ENCODE measurements at regions of chr13 and their contacts with region 1.

Region 1: DNA sequence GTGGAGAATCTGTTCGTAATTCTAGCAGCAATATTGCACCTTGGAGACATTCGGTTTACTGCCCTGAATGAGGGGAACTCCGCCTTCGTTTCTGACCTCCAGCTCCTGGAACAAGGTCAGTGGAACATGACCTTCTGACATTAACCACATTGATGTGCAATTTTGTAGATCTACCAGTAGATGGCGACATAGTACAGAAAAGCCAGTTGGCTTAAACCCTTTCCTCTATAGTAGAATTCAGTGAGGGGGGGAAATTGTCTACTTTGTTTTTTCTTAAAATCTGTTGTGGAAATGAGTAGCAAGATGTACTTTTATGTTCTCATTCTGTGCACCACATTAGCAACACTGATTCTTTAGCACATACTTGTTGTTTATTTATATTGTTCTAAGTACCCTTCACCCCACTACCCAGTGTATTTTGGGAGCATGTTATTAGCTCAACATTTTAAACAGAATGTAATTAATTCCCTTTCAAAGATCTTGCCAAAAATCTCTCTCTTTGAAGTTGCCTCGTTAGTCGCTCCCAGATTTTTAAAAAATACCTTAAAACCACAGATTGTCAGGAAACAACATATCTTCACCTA is 332.2 kb downstream of the MYO16 start:
- DNase-seq: peak; percentile 4
- ATAC-seq: peak; percentile 72
- H3K4me3 Mint-ChIP-seq: no peak overlapping the region
- H3K27ac Mint-ChIP-seq: no peak overlapping the region
- H3K4me1 Mint-ChIP-seq: no peaks in the 10 kb centered on the region
- H3K27me3 Mint-ChIP-seq: peaks cover 6% of the 10 kb centered on the region
- CTCF ChIP-seq: peak; percentile 85

Region 2: DNA sequence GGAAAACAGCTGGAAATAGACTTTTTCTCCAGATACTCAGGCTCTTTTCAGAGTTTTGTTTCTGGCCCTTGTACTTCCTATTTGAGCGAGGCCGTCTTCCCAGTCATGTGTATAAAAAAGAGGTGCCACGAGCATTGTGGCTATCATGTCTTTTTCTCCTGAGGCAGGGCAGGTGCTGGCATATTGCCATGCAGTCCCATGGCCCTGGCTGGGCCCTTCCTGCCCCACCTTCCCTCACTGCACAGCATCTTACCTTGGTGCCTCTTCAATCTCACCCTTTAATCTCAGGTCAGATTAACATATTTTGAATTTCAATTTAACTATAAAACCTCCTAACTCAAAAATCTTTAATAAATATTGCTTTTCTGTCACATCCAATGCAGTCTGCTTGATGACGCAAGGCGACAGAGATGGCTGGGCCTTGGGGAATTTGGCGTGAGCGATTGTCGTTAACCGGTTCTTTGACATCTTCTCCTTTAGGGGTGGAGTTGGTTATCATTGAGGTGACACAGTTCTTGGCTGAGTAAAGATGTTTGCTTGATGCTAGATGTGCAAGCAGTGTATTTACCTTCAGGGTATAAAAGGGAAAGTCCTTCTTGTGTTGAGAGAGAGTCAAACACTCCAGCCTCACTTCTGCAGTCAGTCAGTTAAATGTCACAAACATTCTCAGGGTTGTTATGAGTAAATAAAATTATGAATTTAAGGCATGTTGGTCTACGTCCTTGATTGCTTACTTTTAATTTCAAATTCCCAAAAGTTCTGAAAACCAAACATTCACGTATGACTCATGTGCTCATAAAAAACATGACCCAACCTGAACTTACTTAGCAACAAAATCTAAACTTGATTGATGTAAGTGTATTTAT is 42.4 kb before region 1 on chr13:
- CTCF ChIA-PET with region 1: no interaction called
- POLR2A ChIA-PET with region 1: no interaction called
- intact Hi-C with region 1: no loop called
- DNase-seq: no peak
- ATAC-seq: no peak
- H3K4me3 Mint-ChIP-seq: no peak overlapping the region
- H3K27ac Mint-ChIP-seq: no peak overlapping the region
- H3K4me1 Mint-ChIP-seq: peaks cover 16% of the 10 kb centered on the region
- H3K27me3 Mint-ChIP-seq: peaks cover 2% of the 10 kb centered on the region
- CTCF ChIP-seq: no peak

Region 3: GRCh38 chr13:110116072-110116487 is 1154.4 kb after region 1 on chr13:
- CTCF ChIA-PET with region 1: interaction called, 8 read pairs
- POLR2A ChIA-PET with region 1: no interaction called
- intact Hi-C with region 1: loop called (anchors 5 kb)
- DNase-seq: peak; percentile 60
- ATAC-seq: peak; percentile 78
- H3K4me3 Mint-ChIP-seq: no peak overlapping the region
- H3K27ac Mint-ChIP-seq: no peak overlapping the region
- H3K4me1 Mint-ChIP-seq: no peaks in the 10 kb centered on the region
- H3K27me3 Mint-ChIP-seq: peaks cover 16% of the 10 kb centered on the region
- CTCF ChIP-seq: peak; percentile 88